Right lobe of liver (tissue), 6 donors: ENCODE measurements at regions of chr16 and their contacts with region 1.

Region 1: DNA sequence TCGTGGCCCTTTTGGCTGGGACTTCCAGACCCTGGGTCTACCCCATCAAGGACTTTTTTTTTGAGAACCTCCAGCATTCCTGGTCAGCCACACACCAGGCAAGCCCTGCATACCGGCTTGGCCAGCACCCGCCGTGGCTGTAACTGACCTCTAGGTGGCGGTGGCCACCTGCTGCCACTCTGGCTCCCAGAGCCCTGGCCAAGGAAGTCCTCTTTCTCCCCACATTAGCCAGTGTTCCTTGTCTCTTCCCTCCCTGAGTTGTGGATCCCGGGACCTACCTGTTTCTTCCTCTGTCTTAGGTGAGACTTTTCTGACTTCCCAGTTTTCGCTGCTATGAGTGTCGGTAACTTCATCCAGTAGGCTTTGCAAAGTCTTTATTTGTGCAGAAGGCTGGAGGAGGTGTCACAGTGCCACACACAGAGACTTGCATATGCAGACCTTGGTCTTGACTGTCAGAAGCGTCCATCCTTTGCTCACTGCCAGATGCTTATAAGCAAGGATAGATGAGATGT is 348.3 kb downstream of the CPPED1 start:
- DNase-seq: peak; percentile 68 to 82 (median 76)
- ATAC-seq: peak; percentile 85 to 88 (median 86)
- H3K4me3 ChIP-seq: no peak overlapping the region
- H3K27ac ChIP-seq: no peak overlapping the region
- H3K4me1 ChIP-seq: no peaks in the 10 kb centered on the region
- H3K27me3 ChIP-seq: no peaks in the 10 kb centered on the region
- CTCF ChIP-seq: peak; percentile 89 to 93 (median 90)
- POLR2A ChIP-seq: no peak

Region 2: DNA sequence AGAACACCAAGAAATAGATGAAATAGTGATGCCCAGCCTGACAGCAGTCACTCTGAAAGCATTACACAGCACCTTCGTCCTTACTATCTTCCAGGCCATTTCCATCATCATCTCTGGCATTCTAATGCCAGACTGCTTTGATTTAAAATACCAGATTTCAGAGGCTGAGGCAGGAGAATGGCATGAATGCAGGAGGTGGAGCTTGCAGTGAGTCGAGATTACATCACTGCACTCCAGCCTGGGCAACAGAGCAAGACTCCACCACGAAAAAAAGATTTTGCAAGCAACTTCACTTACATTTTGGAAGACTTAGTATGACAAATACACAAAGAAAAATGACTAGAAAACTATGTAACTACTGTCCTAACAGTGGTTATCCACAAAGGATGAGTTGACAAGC is 104.4 kb after region 1 on chr16:
- intact Hi-C with region 1: loop called in 1 of 2 experiments (anchors 10 kb)
- DNase-seq: no peak
- ATAC-seq: no peak
- H3K4me3 ChIP-seq: no peak overlapping the region
- H3K27ac ChIP-seq: no peak overlapping the region
- H3K4me1 ChIP-seq: no peaks in the 10 kb centered on the region
- H3K27me3 ChIP-seq: no peaks in the 10 kb centered on the region
- CTCF ChIP-seq: no peak
- POLR2A ChIP-seq: no peak

Region 3: DNA sequence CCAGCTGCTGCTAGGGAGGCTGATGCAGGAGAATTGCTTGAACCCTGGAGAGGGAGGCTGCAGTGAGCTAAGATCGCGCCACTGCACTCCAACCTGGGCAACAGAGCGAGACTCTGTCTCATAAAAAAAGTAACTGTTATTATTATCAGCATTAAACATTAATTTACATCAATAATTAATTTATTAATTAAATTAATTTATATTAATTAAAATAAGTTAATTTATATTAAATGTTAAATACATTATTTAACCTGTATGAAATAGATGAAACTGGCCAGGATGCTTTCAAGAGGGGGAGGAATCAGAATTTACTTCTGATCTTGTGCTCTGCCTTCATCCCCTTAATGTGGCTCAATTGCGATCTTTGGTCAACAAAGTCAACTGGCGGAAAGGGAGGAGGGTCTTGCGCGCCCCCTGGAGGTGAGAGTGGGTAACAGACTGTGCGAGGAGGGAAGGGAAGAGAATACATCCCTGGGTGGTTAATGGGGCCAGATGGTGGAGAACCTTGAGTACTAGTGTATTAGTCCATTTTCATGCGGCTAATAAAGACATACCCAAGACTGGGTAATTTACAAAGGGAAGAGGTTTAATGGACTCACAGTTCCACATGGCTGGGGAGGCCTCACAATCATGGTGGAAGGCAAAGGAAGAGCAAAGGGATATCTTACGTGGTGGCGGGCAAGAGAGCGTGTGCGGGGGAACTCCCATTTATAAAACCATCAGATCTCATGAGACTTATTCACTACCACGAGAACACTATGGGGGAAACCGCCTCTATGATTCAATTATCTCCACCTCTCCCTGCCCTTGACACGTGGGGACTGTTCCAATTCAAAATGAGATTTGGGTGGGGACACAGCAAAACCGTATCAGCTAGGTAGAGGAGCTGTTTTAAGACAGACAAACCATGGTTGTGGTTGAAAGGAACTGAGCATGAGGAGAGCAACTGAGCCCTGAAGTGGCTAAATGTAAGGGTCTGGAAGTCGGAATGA is 364.1 kb after region 1 on chr16:
- intact Hi-C with region 1: loop called (anchors 5 to 10 kb)
- DNase-seq: peak; percentile 74 to 83 (median 75)
- ATAC-seq: peak; percentile 89 to 97 (median 93)
- H3K4me3 ChIP-seq: no peak overlapping the region
- H3K27ac ChIP-seq: no peak overlapping the region
- H3K4me1 ChIP-seq: peaks cover 0 to 1% (median 0%) of the 10 kb centered on the region in 4 donors
- H3K27me3 ChIP-seq: no peaks in the 10 kb centered on the region
- CTCF ChIP-seq: peak; percentile 82 to 95 (median 90)
- POLR2A ChIP-seq: no peak